ENCODE measurements at regions of chr13 and their contacts with region 1.

Region 1: DNA sequence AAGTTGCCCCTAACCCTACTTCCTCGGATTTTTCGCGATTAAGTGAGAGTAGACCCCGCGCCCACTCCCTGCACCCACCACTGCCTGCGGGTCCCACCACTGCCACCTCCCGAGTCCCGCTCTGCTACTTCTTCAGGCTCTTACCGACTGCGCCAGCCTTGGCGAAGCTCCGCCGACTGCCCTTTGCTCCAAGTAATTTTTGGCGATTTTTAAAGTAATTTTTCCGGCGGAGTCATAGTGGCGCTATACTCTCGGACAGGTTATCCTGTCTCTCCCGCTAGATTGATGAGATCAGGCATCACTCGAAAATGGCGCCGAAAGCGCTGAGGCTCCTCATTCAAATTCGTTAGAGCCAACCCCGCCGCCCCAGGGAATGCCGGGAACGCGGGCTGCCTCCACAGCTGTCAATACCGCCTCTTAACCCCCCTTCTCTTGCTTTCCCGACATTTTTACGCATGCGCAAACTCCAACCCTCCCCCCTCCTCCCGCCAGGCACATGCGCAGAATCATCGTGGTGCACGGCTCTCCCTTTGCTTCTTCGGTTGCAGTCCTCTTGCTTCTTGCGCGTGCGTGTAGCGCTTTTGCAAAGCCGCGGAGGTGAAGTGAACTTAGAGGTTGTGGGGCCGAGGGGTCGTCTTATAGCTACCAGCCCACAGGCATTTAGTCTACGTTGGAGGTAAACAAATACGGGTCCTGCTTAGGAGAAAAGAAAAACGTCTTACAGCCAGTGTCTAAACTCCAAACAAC is 66.6 kb downstream of the KCNRG start:
- DNase-seq: peak; percentile 99
- H3K4me3 Mint-ChIP-seq: peak overlapping the region; percentile 100
- H3K27ac Mint-ChIP-seq: peak overlapping the region; percentile 100
- H3K4me1 Mint-ChIP-seq: peaks cover 34% of the 10 kb centered on the region
- H3K27me3 Mint-ChIP-seq: no peaks in the 10 kb centered on the region

Region 2: DNA sequence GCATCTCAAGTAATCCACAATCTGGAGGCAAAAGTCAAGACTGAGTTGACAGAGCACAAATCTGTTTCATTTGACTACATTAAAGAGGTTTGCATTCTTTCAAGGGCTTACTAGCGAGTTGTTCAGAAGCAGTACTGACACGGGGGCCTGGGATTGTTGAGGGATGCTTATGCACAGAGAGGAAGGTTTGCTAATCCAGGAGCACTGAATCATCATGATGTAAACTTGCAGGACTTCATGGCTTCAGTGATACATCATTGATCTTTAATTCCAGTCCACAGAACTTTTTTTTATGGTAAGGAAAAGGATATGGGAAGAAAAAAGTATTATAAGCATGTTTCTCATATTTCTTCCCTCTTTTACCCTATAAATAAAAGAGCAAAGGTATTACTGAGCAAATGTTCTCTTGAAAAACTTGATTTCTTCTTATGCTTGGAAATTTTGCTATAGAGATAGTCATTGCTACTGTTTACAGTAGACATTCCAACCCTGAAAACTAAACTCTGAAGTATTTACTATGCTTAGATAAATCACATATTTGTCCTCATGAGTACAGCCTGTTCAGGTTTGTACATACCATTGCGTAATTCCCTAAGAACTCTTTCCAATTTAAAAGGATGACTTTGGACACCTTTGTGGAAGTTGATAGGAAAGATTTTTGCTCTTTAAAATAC is 223.5 kb before region 1 on chr13:
- intact Hi-C with region 1: no loop called
- DNase-seq: no peak
- H3K4me3 Mint-ChIP-seq: no peak overlapping the region
- H3K27ac Mint-ChIP-seq: no peak overlapping the region
- H3K4me1 Mint-ChIP-seq: no peaks in the 10 kb centered on the region
- H3K27me3 Mint-ChIP-seq: peaks cover 4% of the 10 kb centered on the region

Region 3: GRCh38 chr13:49936085-49936940 is 145.5 kb before region 1 on chr13 and contains the start of gene SPRYD7:
- intact Hi-C with region 1: loop called (anchors 1 kb)
- DNase-seq: peak; percentile 92
- H3K4me3 Mint-ChIP-seq: peak within 1 kb of the TSS; percentile 85
- H3K27ac Mint-ChIP-seq: peak within 1 kb of the TSS; percentile 84
- H3K4me1 Mint-ChIP-seq: peaks cover 9% of the 10 kb centered on the region
- H3K27me3 Mint-ChIP-seq: peaks cover 4% of the 10 kb centered on the region
- total RNA-seq, gene SPRYD7: 8.7 and 9.8 TPM in 2 replicates

Region 4: GRCh38 chr13:50123862-50124536 is 42.1 kb after region 1 on chr13:
- intact Hi-C with region 1: loop called (anchors 1 kb)
- DNase-seq: peak; percentile 58
- H3K4me3 Mint-ChIP-seq: peak overlapping the region; percentile 78
- H3K27ac Mint-ChIP-seq: peak overlapping the region; percentile 80
- H3K4me1 Mint-ChIP-seq: peaks cover 32% of the 10 kb centered on the region
- H3K27me3 Mint-ChIP-seq: peaks cover 29% of the 10 kb centered on the region

Region 5: GRCh38 chr13:50365408-50366391 is 283.8 kb after region 1 on chr13:
- intact Hi-C with region 1: loop called (anchors 2 kb)
- DNase-seq: peak; percentile 61
- H3K4me3 Mint-ChIP-seq: peak overlapping the region; percentile 3
- H3K27ac Mint-ChIP-seq: peak overlapping the region; percentile 53
- H3K4me1 Mint-ChIP-seq: peaks cover 48% of the 10 kb centered on the region
- H3K27me3 Mint-ChIP-seq: peaks cover 67% of the 10 kb centered on the region

Region 6: GRCh38 chr13:50594276-50595051 is 512.6 kb after region 1 on chr13:
- intact Hi-C with region 1: loop called (anchors 5 kb)
- DNase-seq: peak; percentile 22
- H3K4me3 Mint-ChIP-seq: peak overlapping the region; percentile 34
- H3K27ac Mint-ChIP-seq: peak overlapping the region; percentile 74
- H3K4me1 Mint-ChIP-seq: peaks cover 35% of the 10 kb centered on the region
- H3K27me3 Mint-ChIP-seq: peaks cover 5% of the 10 kb centered on the region

Region 7: DNA sequence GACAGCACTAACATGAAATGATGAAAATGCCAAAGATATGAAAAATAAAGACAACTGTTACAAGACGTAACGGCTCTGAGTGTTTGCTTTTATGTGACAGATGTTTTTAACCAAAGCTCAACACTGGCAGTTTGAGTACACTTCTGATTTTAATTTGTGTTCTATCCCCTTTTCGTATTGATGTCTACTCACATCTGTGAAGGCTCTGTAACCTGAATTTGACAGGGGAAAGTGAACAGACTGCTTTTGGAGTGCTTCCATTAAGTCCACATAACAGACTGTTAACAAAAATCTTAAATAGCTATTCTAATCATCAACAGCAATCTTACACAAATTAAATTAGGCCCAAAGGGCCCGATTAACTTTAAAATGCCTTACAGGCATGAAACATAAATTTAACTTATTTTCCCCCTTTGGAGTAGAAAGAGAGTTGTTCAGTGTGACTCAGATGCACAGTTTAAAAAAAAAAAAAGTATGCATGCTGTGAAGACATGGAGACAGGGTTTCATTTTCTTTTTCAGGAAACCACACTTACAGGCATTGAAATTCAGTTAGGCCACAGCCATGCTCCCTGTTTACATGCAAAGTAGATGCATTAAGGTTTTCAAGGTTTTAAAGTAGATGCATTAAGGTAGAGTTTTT is 811.5 kb after region 1 on chr13:
- intact Hi-C with region 1: loop called (anchors 5 kb)
- DNase-seq: no peak
- H3K4me3 Mint-ChIP-seq: peak overlapping the region; percentile 51
- H3K27ac Mint-ChIP-seq: peak overlapping the region; percentile 88
- H3K4me1 Mint-ChIP-seq: peaks cover 48% of the 10 kb centered on the region
- H3K27me3 Mint-ChIP-seq: no peaks in the 10 kb centered on the region

Measured in activated T-helper 2 cell treated with anti-CD3 and anti-CD28 coated beads, Interferon-gamma antibody, Interleukin-2, Interleukin-4, amounts not matched to agents 10 μg/mL and 5 μg/mL and 100 μg/mL, durations not matched to agents 14 hours and 24 hours and 36 hours (primary cell).